ENCODE measurements at regions of chr20 and their contacts with region 1.

Region 1: GRCh38 chr20:43187476-43188233 is 2.1 kb downstream of the PTPRT start:
- DNase-seq: peak; percentile 68
- H3K4me3 ChIP-seq: peak overlapping the region; percentile 54
- H3K27ac ChIP-seq: no peak overlapping the region
- H3K4me1 ChIP-seq: peaks cover 17% of the 10 kb centered on the region
- H3K27me3 ChIP-seq: peaks cover 88% of the 10 kb centered on the region
- CTCF ChIP-seq: peak; percentile 95

Region 2: DNA sequence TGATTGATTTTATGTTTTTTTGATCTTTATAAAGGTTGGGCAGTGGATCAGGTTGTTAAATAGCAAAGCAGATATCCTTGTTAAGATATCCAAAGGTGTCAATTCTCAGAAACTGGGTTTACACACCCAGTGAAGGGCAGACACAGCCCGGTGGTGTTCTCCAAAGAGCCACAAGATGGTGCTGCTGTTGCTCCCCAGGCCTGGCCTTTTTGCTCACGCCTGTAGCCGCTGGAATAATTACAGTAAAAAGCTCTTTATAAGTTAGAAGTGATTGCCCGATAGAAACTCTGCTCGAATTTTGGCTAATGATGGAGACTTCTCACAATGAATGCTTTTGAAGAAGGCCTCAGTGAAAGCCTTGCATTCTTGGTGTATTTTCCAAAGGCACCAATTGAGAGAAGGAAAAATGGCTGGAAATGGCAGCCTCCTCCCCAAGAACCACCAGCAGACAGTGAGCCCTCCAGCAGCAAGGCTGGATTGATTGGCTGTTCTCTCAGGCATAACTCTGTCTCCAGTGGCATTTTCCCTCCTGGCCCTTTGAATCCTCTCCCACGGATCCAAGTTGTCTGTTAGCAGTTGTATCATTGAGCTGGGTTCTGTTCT is 1449.0 kb before region 1 on chr20:
- intact Hi-C with region 1: loop called (anchors 10 kb)
- DNase-seq: peak; percentile 41
- H3K4me3 ChIP-seq: no peak overlapping the region
- H3K27ac ChIP-seq: no peak overlapping the region
- H3K4me1 ChIP-seq: no peaks in the 10 kb centered on the region
- H3K27me3 ChIP-seq: no peaks in the 10 kb centered on the region
- CTCF ChIP-seq: peak; percentile 84

Measured in left ventricle myocardium inferior (tissue), 1 donor.